SK-N-SH (cell line): ENCODE measurements at regions of chr9 and their contacts with region 1.

Region 1: DNA sequence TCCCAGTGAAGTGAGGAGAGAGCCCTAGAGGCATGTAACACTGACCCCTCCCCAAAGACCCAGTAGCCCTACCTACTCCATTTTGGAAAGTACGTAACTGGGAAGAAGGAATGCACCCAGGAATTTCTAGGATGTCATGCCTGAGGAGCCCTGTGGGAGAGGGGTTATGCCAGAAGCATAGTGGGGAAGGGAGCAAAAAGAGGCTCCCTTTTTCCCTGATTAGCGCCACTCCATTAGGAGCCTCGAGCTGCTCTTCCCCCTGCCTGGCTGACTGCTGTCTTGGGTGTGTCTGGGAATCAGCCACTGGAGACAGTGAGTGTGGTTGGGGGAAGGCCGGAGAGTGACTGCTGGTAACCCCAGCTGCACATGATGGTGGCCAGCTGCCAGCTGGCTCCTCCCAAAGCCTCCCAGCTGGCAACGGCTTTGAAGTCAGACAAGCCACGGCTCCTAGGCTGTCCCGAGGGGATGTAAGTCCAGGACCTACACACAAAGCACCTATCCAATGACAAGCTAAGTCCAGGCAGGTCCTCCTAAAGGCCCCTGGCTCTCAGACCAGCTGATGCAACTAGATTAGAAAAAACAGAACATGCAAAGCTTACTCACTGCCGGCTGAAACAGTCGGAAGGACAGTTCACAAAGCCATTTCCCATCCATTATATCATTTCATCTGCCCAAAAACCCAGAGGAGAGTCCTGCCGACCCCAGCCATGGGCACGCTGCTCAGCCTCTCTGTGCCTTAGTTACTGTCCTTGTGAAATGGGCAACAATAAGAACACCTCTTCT is 136.6 kb upstream of the ABCA1 start:
- DNase-seq: peak; percentile 79
- H3K4me3 ChIP-seq: no peak overlapping the region
- H3K27ac ChIP-seq: peak overlapping the region; percentile 78 to 89
- H3K4me1 ChIP-seq: peaks cover 14 to 15% of the 10 kb centered on the region in 2 experiments; a peak in 3 of 4 replicates
- H3K27me3 ChIP-seq: no peaks in the 10 kb centered on the region
- CTCF ChIP-seq: no peak
- EP300 ChIP-seq: 0 out of 4 replicates have a peak, but pooled peaks have one; percentile 35 to 47
- RAD21 ChIP-seq: peak; percentile 6; the same call in 1 of the 2 replicates

Region 2: DNA sequence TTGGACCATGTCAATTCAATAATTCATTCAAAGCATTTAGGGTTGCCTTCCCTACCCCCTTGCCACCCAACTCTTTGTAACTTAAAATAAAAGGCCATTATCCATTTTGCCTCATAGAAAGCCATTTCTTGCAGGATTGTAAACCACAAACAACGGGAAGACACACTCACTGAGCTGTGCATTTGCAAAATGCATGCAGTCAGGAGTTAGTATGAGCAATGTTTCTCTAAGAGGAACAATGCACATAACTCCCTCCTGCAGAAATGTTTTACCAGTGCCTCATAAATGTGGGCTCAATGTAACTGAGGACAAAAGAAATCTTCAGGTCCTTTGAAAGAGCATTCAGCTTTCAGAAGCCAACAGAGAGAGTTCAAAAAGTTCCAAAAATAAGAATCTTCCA is 38.1 kb before region 1 on chr9:
- CTCF ChIA-PET with region 1: no interaction called
- POLR2A ChIA-PET with region 1: no interaction called
- DNase-seq: no peak
- H3K4me3 ChIP-seq: no peak overlapping the region
- H3K27ac ChIP-seq: no peak overlapping the region
- H3K4me1 ChIP-seq: peaks cover 0 to 12% of the 10 kb centered on the region in 2 experiments; a peak in 1 of 4 replicates
- H3K27me3 ChIP-seq: no peaks in the 10 kb centered on the region
- CTCF ChIP-seq: no peak
- EP300 ChIP-seq: no peak
- RAD21 ChIP-seq: no peak

Region 3: DNA sequence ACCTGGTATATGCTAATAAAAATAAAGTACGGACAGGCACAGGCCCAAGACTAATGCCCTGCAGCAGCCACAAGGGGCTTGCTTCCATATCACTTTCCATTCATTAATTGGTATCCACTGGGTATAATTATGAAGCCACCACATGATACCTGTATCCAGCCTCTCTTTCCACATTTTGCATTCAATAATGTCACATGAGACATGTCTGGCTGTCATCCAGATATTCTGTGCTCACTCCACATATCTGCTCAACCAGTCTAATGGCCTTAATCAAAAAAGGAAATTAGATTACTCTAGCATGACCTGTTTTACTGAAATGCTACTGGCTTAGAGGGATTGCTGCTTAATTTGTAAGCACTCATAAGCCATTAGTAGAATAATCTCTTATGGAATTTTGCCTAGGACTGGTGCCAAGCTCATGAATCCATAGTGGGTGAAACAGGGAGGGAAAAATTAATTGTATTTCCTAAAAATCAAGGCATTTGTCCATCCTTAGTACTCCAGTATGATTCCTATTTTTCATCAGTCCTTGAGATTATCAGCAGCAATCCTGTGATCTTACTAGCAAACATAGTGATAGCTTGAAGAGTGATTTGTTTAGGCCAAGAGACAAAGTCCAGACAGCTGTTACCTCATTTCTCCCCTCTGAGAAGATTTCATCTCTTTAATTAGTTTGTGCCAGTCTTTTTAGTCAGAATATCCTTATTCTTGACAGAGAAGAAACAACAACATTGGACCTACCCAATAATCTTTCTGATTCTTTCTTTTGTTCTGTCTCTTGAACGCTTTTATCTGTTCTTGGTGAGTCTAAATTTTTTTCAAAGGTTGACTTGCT is 17.4 kb before region 1 on chr9:
- CTCF ChIA-PET with region 1: interaction called, 10 read pairs
- POLR2A ChIA-PET with region 1: interaction called, 3 read pairs
- DNase-seq: peak; percentile 60
- H3K4me3 ChIP-seq: no peak overlapping the region
- H3K27ac ChIP-seq: peak overlapping the region in 1 of 2 experiments; percentile 47; a peak in 2 of 4 replicates
- H3K4me1 ChIP-seq: peaks cover 0 to 16% of the 10 kb centered on the region in 2 experiments; a peak in 2 of 4 replicates
- H3K27me3 ChIP-seq: no peaks in the 10 kb centered on the region
- CTCF ChIP-seq: peak; percentile 28; the same call in 1 of the 2 replicates
- EP300 ChIP-seq: peak in 1 of 2 experiments; percentile 86; a peak in 2 of 4 replicates
- RAD21 ChIP-seq: no peak